Body of pancreas (tissue), 4 donors: ENCODE measurements at regions of chr20 and their contacts with region 1.

Region 1: GRCh38 chr20:47620808-47621805 is 119.4 kb downstream of the NCOA3 start:
- DNase-seq: no peak
- ATAC-seq: no peak
- H3K4me3 ChIP-seq: no peak overlapping the region
- H3K27ac ChIP-seq: no peak overlapping the region
- H3K4me1 ChIP-seq: no peaks in the 10 kb centered on the region
- H3K27me3 ChIP-seq: no peaks in the 10 kb centered on the region
- CTCF ChIP-seq: peak; percentile 62 to 97 (median 81)
- POLR2A ChIP-seq: no peak

Region 2: DNA sequence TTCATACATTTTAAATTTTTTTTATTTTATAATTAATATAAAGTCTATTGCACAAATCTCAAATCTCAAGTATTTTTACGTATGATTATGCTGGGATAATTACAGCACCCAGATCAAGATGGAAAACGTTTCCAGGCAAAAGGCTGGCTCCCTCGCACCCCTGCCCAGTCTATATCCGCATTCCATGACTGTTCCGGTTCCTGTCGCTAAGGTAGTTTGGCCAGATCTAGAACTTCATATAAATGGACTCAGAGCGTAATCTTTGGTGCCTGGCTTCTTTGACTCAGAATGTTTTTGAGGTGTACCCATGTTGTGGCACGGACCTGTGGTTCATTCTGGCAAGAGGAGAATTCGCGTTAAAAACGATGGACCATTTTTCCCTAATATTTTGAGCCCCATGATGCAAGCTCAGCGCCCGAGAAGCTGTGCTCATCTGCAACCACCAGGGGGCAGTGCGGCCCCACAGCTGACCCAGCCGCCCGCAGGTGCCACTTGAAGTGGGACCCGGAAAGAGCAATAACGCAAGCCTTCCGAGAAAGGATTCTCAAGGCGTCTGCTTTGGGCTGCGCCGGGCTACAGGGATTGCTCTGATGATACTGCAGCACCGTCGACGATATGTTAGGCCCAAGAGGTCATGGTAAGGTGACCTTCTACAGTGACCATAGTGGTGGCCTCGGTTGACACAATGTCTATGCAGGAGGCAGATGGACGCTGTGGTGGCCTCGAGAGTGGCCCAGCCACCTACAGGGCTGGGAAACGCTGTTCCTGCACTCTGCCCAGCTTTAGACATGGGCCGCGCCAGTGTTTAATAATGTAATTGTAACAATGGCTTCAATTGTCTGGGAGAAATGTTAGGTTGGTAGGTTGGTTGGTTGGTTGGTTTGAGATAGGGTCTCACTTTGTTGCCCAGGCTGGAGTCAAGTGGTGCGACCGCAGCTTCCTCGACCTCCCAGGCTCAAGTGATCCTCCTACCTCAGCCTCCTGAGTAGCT is 424.7 kb before region 1 on chr20:
- intact Hi-C with region 1: loop called (anchors 10 kb)
- DNase-seq: peak; percentile 65 to 75 (median 70)
- ATAC-seq: peak; percentile 67
- H3K4me3 ChIP-seq: no peak overlapping the region
- H3K27ac ChIP-seq: no peak overlapping the region
- H3K4me1 ChIP-seq: peaks cover 12% of the 10 kb centered on the region
- H3K27me3 ChIP-seq: no peaks in the 10 kb centered on the region
- CTCF ChIP-seq: peak; percentile 82 to 94 (median 85)
- POLR2A ChIP-seq: no peak